ENCODE measurements at regions of chr2 and their contacts with region 1.

Region 1: DNA sequence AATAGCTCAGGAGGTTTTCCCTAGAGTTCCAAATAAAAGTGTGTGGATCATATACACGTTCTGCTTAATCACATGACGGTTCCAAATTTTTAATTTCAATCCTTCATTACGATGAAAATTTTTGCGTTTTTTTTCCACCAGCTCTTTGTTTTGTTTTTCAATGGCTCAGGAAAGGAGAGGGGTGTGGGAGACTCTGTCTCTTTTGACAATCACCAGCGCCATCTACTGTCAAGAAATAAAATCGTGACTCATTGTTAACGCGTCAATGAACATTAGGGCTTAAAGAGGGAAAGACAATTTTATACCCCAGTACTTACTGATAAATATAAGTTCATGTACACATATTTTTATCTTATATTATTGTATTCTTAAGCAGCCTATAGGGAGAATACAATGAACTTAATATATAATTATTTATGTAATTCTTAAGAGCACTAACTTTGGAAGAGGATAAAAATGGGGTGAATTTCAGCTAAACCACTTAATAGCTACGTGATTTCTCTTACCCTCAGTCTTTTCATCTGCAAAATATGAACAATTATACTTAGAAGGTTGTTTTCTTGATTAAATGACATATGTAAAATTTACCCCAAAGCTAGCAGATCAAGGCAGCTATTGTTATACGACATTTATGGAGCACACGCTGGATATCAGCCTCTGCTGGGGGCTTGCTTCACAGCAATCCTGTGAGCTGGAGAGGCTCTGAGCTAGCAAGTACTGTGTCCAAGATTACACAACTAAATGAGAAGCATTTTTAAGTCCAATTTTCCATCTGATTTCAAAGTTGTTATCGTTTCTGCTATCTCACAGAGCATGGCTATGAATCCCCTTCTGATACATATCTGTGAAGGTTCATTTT is 47.4 kb upstream of the RMDN2 start:
- DNase-seq: peak; percentile 73
- H3K4me3 ChIP-seq: no peak overlapping the region
- H3K27ac ChIP-seq: no peak overlapping the region
- H3K4me1 ChIP-seq: peaks cover 3% of the 10 kb centered on the region
- H3K27me3 ChIP-seq: no peaks in the 10 kb centered on the region
- CTCF ChIP-seq: peak; percentile 31 to 39
- POLR2A ChIP-seq: no peak

Region 2: DNA sequence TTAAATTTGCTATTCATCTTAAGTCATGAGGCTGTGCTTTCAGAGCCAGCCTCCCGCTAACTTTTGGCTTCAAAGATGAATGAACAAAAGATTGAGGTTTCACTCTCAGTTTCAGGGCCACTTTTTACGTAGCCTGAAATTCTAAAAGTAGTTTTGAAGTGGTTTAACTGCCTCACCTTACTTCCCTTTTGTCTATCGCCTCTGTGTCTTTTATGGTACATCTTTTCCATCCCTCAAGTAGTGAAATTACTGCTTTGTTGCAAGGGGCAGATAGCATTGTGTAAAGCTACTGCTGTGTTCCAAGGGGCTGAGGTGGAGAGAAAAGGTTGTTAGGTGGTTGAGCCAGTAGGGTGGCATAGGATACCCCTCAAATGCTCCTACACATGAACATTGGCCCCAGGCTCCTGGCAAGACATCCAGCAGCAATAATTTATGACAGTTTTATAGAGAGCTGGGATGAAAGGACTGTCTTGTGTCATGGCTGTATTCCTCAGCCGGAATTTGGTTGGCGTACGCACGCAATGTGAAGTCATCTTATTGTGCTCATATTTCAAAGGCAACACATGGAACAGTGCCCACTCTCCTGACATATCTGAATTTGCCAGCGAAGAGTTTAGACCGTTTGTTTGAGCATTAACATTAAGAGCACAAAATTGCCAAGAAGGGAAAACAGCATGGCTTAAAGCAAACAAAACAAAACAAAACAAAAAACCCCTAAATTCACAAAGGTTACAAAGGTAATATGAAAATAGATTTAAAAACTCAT is 501.1 kb before region 1 on chr2:
- CTCF ChIA-PET with region 1: interaction called, 10 read pairs
- POLR2A ChIA-PET with region 1: no interaction called
- dilution Hi-C with region 1: no loop called
- intact Hi-C with region 1: no loop called
- DNase-seq: no peak
- H3K4me3 ChIP-seq: no peak overlapping the region
- H3K27ac ChIP-seq: no peak overlapping the region
- H3K4me1 ChIP-seq: peaks cover 14% of the 10 kb centered on the region
- H3K27me3 ChIP-seq: no peaks in the 10 kb centered on the region
- CTCF ChIP-seq: no peak
- POLR2A ChIP-seq: no peak

Region 3: DNA sequence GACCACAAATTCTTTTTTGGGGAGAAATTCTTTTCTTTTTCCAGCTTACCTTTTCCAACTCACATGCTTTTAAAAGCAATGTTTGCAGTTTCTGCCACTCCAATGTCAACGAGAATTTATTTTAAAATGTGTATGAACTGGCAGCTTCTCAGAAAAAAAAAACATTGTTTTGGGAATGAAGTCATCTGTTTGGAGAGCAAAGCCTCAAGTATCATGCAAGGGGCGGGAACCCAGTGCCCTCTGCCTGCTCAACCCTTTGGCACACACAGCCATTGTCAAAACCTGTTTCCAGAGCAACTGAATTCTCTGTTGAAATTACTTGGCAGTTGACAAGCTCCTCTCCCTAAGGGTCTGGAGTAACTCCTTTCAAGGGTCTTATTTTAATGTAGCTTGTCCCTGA is 404.7 kb before region 1 on chr2:
- CTCF ChIA-PET with region 1: interaction called, 13 read pairs
- POLR2A ChIA-PET with region 1: no interaction called
- dilution Hi-C with region 1: no loop called
- intact Hi-C with region 1: no loop called
- DNase-seq: peak; percentile 82
- H3K4me3 ChIP-seq: no peak overlapping the region
- H3K27ac ChIP-seq: no peak overlapping the region
- H3K4me1 ChIP-seq: peaks cover 6% of the 10 kb centered on the region
- H3K27me3 ChIP-seq: no peaks in the 10 kb centered on the region
- CTCF ChIP-seq: no peak
- POLR2A ChIP-seq: no peak

Region 4: GRCh38 chr2:37648331-37649011 is 229.2 kb before region 1 on chr2:
- CTCF ChIA-PET with region 1: interaction called, 25 read pairs
- POLR2A ChIA-PET with region 1: no interaction called
- dilution Hi-C with region 1: no loop called
- intact Hi-C with region 1: loop called (anchors 5 kb)
- DNase-seq: peak; percentile 80
- H3K4me3 ChIP-seq: no peak overlapping the region
- H3K27ac ChIP-seq: peak overlapping the region; percentile 68
- H3K4me1 ChIP-seq: peaks cover 80% of the 10 kb centered on the region
- H3K27me3 ChIP-seq: no peaks in the 10 kb centered on the region
- CTCF ChIP-seq: peak; percentile 33 to 41
- POLR2A ChIP-seq: no peak

Region 5: DNA sequence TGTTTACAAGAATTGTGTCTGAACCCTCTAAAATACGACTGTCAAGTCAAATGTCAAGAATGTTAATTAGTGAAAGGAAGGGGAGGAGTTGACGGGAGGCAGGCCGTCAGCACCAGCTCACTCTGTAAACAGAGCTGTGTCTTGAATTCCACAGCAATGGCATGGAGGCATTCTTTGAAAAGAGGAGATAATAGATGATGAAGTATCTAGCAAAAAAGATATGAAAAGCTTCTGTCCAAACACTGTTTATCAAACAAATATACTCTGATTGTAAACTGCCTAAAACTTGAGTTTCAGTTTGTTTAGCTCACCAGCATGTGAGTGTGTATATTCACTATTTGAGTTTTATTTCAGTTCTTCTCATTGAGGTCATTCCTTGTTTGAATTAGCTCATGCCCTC is 111.6 kb before region 1 on chr2:
- CTCF ChIA-PET with region 1: interaction called, 16 read pairs
- POLR2A ChIA-PET with region 1: no interaction called
- dilution Hi-C with region 1: no loop called
- intact Hi-C with region 1: no loop called
- DNase-seq: peak; percentile 40
- H3K4me3 ChIP-seq: no peak overlapping the region
- H3K27ac ChIP-seq: peak overlapping the region; percentile 26
- H3K4me1 ChIP-seq: peaks cover 15% of the 10 kb centered on the region
- H3K27me3 ChIP-seq: no peaks in the 10 kb centered on the region
- CTCF ChIP-seq: no peak
- POLR2A ChIP-seq: no peak

Region 6: DNA sequence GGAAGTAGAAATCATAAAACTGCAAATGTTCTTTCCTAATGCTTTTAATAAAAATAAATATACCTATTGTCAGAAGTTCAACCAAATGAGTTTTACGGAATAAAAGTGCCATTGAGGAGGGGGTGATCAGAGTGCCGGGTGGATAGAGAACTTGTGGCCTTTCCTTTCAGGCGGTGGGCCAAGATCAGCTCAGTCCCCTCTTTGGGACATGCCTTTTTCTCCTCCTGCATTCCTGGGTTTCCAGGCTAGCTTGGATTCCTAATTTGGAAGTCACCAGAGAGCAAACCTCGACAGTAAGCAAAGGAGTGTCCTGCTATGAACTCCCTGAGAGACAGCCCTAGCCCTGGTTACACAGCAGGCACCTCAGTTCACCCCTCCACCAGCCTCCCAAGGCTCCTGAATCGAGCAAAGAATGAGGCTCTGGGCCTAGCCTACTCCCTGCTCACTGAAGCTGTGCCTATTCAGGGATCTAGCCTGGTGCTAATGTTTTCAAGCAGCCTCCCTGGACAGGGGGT is 19.4 kb before region 1 on chr2:
- CTCF ChIA-PET with region 1: interaction called, 97 read pairs
- POLR2A ChIA-PET with region 1: interaction called, 3 read pairs
- dilution Hi-C with region 1: no loop called
- intact Hi-C with region 1: loop called (anchors 1 kb)
- DNase-seq: no peak
- H3K4me3 ChIP-seq: no peak overlapping the region
- H3K27ac ChIP-seq: no peak overlapping the region
- H3K4me1 ChIP-seq: peaks cover 23% of the 10 kb centered on the region
- H3K27me3 ChIP-seq: no peaks in the 10 kb centered on the region
- CTCF ChIP-seq: no peak
- POLR2A ChIP-seq: no peak

Region 7: GRCh38 chr2:38284971-38285370 is 407.3 kb after region 1 on chr2:
- CTCF ChIA-PET with region 1: no interaction called
- POLR2A ChIA-PET with region 1: no interaction called
- dilution Hi-C with region 1: no loop called
- intact Hi-C with region 1: no loop called
- DNase-seq: no peak
- H3K4me3 ChIP-seq: no peak overlapping the region
- H3K27ac ChIP-seq: no peak overlapping the region
- H3K4me1 ChIP-seq: no peaks in the 10 kb centered on the region
- H3K27me3 ChIP-seq: peaks cover 0 to 5% of the 10 kb centered on the region in 2 experiments
- CTCF ChIP-seq: no peak
- POLR2A ChIP-seq: no peak

Region 8: GRCh38 chr2:38806015-38806732 is 928.5 kb after region 1 on chr2:
- CTCF ChIA-PET with region 1: no interaction called
- POLR2A ChIA-PET with region 1: no interaction called
- dilution Hi-C with region 1: no loop called
- intact Hi-C with region 1: no loop called
- DNase-seq: no peak
- H3K4me3 ChIP-seq: no peak overlapping the region
- H3K27ac ChIP-seq: no peak overlapping the region
- H3K4me1 ChIP-seq: no peaks in the 10 kb centered on the region
- H3K27me3 ChIP-seq: no peaks in the 10 kb centered on the region
- CTCF ChIP-seq: no peak
- POLR2A ChIP-seq: no peak